OCI-LY7 (cell line): ENCODE measurements at regions of chr10 and their contacts with region 1.

Region 1: DNA sequence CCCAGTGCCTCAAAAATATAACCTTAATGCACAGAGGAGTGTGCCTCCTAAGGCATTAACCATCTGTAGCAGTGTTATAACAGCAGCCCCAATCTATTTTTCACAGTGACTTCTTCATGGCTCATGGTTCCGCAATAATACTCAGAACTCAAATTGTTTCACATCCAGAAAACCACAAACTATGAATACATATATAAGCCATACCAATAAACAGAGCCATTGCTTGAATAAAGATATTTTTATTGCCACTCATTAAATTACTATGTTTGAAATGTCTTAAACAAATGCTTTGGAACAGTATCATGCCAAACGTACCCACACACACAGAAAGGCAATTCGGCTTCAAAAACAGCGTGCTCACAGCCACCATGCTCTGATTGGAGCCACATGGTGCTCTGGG is 629.3 kb upstream of the NRP1 start:
- DNase-seq: no peak
- H3K4me3 ChIP-seq: no peak overlapping the region
- H3K27ac ChIP-seq: no peak overlapping the region
- H3K4me1 ChIP-seq: no peaks in the 10 kb centered on the region
- CTCF ChIP-seq: no peak

Region 2: GRCh38 chr10:34932233-34932632 is 968.5 kb after region 1 on chr10:
- CTCF ChIA-PET with region 1: no interaction called
- POLR2A ChIA-PET with region 1: interaction called, 10 read pairs
- intact Hi-C with region 1: no loop called
- DNase-seq: no peak
- H3K4me3 ChIP-seq: no peak overlapping the region
- H3K27ac ChIP-seq: no peak overlapping the region
- H3K4me1 ChIP-seq: no peaks in the 10 kb centered on the region
- CTCF ChIP-seq: no peak